CD14-positive monocyte (primary cell): ENCODE measurements at regions of chr9 and their contacts with region 1.

Region 1: DNA sequence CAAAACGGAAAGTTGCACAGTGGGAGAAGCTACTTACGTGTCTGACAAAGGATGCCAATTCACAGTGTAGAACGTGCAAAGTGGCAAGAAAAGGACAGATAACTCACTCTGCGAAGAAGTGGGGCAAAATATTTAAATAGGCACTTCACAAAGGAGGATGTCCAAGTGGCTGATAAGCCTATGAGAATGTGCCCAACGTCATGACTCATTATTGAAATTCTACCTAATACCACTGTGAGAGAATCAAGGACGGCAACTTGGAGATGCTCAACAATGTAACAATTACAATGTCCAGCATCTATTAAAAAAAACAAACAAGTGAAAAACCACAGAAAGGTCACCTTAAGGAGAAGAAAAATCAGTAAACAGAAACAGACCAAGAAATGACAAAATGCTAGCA is 59.0 kb downstream of the NACC2 start:
- DNase-seq: no peak
- H3K4me3 ChIP-seq: no peak overlapping the region
- H3K4me3 Mint-ChIP-seq: no peak overlapping the region
- H3K27ac ChIP-seq: no peak overlapping the region
- H3K27ac Mint-ChIP-seq: no peak overlapping the region
- H3K4me1 ChIP-seq: peaks cover 40 to 43% of the 10 kb centered on the region in 2 donors
- H3K4me1 Mint-ChIP-seq: peaks cover 52% of the 10 kb centered on the region
- H3K27me3 ChIP-seq: no peaks in the 10 kb centered on the region
- H3K27me3 Mint-ChIP-seq: peaks cover 0 to 2% (median 0%) of the 10 kb centered on the region in 3 donors
- CTCF ChIP-seq: no peak

Region 2: DNA sequence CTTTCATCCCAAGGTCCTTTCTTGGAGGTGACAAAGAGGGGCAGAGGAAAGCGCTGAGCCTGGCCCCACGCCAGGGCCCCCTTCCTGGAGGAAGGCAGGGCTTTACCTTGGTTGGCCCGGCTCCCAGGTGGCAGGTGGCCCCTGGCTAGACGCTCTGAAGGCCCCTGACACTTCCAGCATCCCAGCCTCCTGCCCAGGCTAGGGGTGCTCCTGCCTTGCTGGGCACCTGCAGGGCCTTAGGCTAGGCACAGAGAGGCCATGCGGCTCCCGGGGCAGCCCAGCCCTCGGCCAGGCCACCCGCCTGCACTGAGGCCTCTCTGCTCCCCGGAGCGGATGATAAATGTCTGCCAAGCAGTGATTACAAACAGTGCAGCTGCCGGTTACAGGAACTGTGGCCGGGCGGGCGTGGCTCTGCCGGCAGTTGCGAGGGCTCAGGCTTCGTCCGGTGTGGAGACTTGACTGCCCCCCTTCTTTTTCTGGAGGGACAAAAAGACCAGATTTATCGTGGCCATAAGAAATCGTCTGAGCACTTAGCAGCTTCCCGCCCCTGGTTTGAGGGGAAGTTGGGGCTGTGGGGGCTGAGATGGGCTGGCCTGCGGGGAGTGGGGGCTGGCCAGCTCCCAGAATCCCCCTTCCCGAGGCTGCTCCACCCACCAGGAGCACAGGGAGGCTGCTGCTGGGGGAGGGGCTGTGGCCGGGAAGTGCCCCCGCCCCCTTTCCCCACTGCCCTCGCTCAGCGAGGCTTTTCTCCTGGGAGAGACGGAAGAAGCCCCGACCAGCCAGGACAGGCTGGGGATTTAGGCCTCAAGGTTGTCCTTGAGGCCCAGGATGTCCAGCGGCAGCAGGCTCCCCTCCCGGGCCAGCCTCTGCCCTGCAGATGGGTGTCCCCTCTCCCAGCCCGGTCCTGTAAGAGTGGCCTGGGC is 43.3 kb before region 1 on chr9:
- intact Hi-C with region 1: loop called in 1 of 2 experiments (anchors 5 kb)
- DNase-seq: peak; percentile 77 to 85 (median 78)
- H3K4me3 ChIP-seq: peak overlapping the region; percentile 3 to 74 (median 40)
- H3K4me3 Mint-ChIP-seq: peak overlapping the region; percentile 60 to 78
- H3K27ac ChIP-seq: peak overlapping the region; percentile 87 to 88
- H3K27ac Mint-ChIP-seq: peak overlapping the region; percentile 65 to 89 (median 82)
- H3K4me1 ChIP-seq: peaks cover 60% of the 10 kb centered on the region in 2 donors
- H3K4me1 Mint-ChIP-seq: peaks cover 54% of the 10 kb centered on the region
- H3K27me3 ChIP-seq: no peaks in the 10 kb centered on the region
- H3K27me3 Mint-ChIP-seq: peaks cover 0 to 12% (median 2%) of the 10 kb centered on the region in 3 donors
- CTCF ChIP-seq: no peak

Region 3: GRCh38 chr9:136133191-136133958 is 97.3 kb after region 1 on chr9:
- intact Hi-C with region 1: no loop called
- DNase-seq: no peak
- H3K4me3 ChIP-seq: peak overlapping the region in 1 of 3 experiments; percentile 40
- H3K4me3 Mint-ChIP-seq: peak overlapping the region; percentile 27 to 77
- H3K27ac ChIP-seq: no peak overlapping the region
- H3K27ac Mint-ChIP-seq: no peak overlapping the region
- H3K4me1 ChIP-seq: no peaks in the 10 kb centered on the region
- H3K4me1 Mint-ChIP-seq: peaks cover 5% of the 10 kb centered on the region
- H3K27me3 ChIP-seq: peaks cover 13 to 36% of the 10 kb centered on the region in 2 donors
- H3K27me3 Mint-ChIP-seq: peaks cover 38 to 75% (median 46%) of the 10 kb centered on the region in 3 donors
- CTCF ChIP-seq: peak; percentile 31